RWPE1 (cell line): ENCODE measurements at regions of chr11 and their contacts with region 1.

Region 1: GRCh38 chr11:67382276-67383136 is 9.1 kb upstream of the CLCF1 start:
- DNase-seq: peak; percentile 71
- H3K27ac ChIP-seq: peak overlapping the region; percentile 31
- CTCF ChIP-seq: peak; percentile 97

Region 2: DNA sequence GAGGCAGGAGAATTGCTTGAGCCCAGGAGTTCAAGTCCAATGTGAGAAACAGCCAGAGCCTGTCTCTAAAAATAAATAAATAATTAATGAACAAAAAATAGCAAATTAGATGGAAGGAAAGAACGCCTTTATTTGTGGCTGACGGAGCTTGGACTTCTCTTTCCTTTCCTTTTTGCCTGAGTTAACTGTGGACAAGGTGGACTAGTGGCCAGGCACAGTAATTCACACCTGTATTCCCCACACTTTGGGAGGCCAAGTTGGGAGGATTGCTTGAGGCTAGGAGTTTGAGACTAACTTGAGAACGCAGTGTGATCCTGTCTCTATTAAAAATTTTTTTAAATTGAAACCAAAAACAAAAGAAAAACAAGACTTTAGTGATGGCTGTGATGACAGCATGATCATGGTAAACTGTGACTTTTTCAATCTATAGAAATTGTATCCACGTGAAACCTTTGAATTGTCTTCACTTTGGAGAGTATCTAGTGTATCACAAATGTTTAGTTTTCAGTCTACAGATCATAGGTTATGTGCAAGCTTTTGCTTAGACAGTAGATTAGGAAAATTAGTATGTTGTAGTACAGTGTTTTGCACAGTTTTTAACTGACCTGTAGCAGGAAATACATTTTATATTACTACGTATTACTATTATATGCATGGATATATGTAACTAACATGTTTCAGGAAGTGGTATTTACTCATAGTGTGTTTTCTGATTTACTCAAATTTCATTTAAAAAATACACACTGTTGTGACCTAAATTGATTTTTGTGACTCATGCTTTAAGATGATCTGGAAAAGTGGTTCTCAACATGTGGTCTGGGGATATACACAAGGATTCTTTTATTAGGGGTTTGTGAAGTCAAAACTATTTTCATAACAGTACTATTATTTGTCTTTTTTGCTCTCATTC is 221.4 kb before region 1 on chr11:
- CTCF ChIA-PET with region 1: no interaction called
- POLR2A ChIA-PET with region 1: no interaction called
- DNase-seq: no peak
- H3K27ac ChIP-seq: no peak overlapping the region
- CTCF ChIP-seq: no peak

Region 3: GRCh38 chr11:67230406-67230805 is 152.1 kb before region 1 on chr11:
- CTCF ChIA-PET with region 1: no interaction called
- POLR2A ChIA-PET with region 1: no interaction called
- DNase-seq: no peak
- H3K27ac ChIP-seq: no peak overlapping the region
- CTCF ChIP-seq: no peak

Region 4: GRCh38 chr11:67345920-67346799 is 36.3 kb before region 1 on chr11:
- CTCF ChIA-PET with region 1: interaction called, 113 read pairs
- POLR2A ChIA-PET with region 1: interaction called, 4 read pairs
- DNase-seq: peak; percentile 81
- H3K27ac ChIP-seq: peak overlapping the region; percentile 85
- CTCF ChIP-seq: peak; percentile 87

Region 5: DNA sequence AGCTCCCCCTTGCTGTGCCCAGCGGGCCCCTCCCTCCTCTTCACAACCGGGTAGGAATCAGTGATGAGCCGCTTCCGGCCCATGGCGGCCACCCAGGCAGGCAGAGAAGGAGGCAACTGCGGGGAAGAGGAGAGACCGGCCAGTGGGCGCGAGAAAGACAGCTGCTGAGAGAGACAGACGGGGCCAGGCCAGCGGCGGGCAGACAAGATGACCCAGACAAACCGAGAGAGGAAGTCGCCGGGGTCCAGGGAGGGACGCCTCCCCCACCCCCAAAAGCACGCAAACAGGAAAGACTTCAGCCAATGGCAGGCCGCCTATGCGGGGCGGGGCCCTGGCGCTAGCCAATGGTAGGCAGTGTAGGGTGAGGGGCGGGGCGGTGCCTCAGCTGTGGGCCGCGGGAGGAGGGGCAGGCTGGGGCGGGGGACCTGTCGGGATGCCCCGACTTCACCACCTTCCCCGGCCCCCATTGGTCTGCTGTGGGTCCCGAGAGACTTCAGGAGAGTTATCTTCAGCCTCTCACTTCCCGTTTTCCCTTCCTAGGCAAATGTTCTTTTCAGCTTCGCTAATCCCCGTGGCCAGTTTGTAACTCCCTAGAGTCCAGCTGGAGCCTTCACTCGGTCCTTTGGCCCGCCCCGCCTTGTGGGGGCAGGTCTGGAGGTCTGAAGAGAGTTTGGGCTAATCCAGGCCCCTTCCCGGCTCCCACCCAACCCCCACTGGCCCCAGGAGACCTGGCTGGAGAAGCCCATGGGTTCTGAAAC is 29.0 kb before region 1 on chr11 and contains the start of gene POLD4:
- CTCF ChIA-PET with region 1: interaction called, 113 read pairs
- POLR2A ChIA-PET with region 1: interaction called, 7 read pairs
- DNase-seq: peak; percentile 95
- H3K27ac ChIP-seq: peak within 1 kb of the TSS; percentile 97
- CTCF ChIP-seq: no peak

Region 6: GRCh38 chr11:67364783-67365722 is 17.5 kb before region 1 on chr11:
- CTCF ChIA-PET with region 1: interaction called, 16 read pairs
- POLR2A ChIA-PET with region 1: no interaction called
- DNase-seq: no peak
- H3K27ac ChIP-seq: peak overlapping the region; percentile 66
- CTCF ChIP-seq: no peak